ENCODE measurements at regions of chr20 and their contacts with region 1.

Region 1: GRCh38 chr20:35263532-35264223 is 14.2 kb downstream of the MMP24OS start:
- DNase-seq: peak in 1 of 2 experiments; percentile 59
- H3K4me3 ChIP-seq: no peak overlapping the region
- H3K27ac ChIP-seq: peak overlapping the region; percentile 7; the same call in 1 of the 2 replicates
- H3K4me1 ChIP-seq: peaks cover 14% of the 10 kb centered on the region
- H3K27me3 ChIP-seq: no peaks in the 10 kb centered on the region
- CTCF ChIP-seq: no peak

Region 2: GRCh38 chr20:35042268-35042667 is 221.4 kb before region 1 on chr20:
- CTCF ChIA-PET with region 1: no interaction called
- POLR2A ChIA-PET with region 1: no interaction called
- intact Hi-C with region 1: no loop called
- DNase-seq: no peak
- H3K4me3 ChIP-seq: no peak overlapping the region
- H3K27ac ChIP-seq: no peak overlapping the region
- H3K4me1 ChIP-seq: peaks cover 12% of the 10 kb centered on the region
- H3K27me3 ChIP-seq: no peaks in the 10 kb centered on the region
- CTCF ChIP-seq: no peak

Region 3: DNA sequence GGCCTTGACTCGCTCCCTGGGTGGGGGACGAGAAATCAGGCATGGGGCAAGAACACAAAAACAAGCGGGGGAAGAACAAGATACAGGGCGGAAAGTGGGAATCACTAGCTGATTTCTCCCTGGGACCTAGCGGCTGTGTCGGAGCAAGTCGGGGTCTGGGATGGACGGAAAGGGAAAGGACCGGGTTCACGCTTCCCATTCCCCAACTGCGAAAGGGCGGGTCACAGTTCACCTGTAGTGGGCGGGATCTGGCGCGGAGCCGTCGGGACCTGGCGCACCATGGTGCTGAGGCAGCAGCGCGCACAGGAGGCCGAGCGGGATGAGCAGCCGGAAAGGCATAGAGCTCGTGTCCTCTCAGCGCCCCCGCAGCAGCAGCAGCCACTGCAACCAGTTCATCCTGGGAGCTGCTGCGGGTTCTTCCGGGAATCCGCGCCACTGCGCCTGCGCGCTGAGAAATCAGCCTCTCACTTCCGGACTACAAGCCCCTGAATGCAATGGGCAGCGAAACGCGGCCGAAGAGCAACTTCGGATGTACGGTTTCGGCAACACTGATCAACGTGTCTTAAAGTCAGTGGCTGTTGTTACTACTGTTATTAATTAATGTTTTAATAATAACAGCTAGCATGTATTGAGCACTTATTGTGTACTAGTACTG is 116.6 kb before region 1 on chr20 and contains the start of gene EDEM2:
- CTCF ChIA-PET with region 1: interaction called, 10 read pairs
- POLR2A ChIA-PET with region 1: interaction called, 25 read pairs
- intact Hi-C with region 1: loop called (anchors 1 kb)
- DNase-seq: peak; percentile 89 to 96
- H3K4me3 ChIP-seq: peak within 1 kb of the TSS; percentile 93
- H3K27ac ChIP-seq: peak within 1 kb of the TSS; percentile 94
- H3K4me1 ChIP-seq: peaks cover 14% of the 10 kb centered on the region
- H3K27me3 ChIP-seq: no peaks in the 10 kb centered on the region
- CTCF ChIP-seq: no peak
- total RNA-seq, gene EDEM2: 28.6 and 34.9 TPM in 2 replicates

Region 4: DNA sequence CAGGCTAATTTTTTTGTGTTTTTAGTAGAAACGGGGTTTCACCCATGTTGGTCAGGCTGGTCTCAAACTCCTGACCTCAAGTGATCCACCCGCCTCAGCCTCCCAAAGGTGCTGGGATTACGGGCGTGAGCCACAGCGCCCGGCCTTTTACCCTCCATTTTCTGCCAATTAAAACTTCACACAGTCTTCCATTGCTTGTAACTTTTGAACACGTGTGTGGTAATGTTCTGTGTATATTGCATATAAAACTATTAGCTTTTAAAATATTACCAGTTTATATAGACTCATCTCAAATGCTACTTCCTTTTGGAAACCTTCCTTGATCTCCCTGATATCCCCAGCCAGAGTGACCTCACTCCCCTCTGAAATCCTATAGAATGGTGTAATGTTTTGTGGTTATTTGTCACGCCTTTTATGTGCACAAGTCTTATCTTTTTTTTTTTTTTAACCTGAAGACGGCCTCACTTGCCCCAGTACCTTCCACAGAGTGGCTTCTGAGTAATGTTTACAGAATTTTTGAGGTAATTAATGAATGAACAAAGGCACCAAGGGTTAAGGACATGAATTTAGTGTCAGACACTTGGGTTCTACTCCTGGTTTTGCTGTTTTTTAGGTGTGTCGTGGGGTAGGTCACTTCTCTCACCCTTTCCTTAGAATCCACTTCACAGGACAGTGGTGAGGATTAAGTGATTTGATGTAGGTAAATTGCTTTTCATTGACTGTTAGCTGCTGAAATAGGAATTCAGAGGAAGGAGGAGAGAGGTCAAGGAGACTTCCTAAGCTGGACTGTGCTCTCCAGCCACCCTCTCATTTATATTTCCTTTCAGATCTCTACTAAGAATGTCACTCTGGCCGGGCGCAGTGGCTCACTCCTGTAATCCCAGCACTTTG is 48.4 kb before region 1 on chr20:
- CTCF ChIA-PET with region 1: interaction called, 11 read pairs
- POLR2A ChIA-PET with region 1: no interaction called
- intact Hi-C with region 1: loop called (anchors 1 kb)
- DNase-seq: peak; percentile 52 to 98
- H3K4me3 ChIP-seq: no peak overlapping the region
- H3K27ac ChIP-seq: peak overlapping the region; percentile 94
- H3K4me1 ChIP-seq: peaks cover 28% of the 10 kb centered on the region
- H3K27me3 ChIP-seq: no peaks in the 10 kb centered on the region
- CTCF ChIP-seq: no peak

Region 5: GRCh38 chr20:35312348-35312747 is 48.7 kb after region 1 on chr20:
- CTCF ChIA-PET with region 1: interaction called, 19 read pairs
- POLR2A ChIA-PET with region 1: no interaction called
- intact Hi-C with region 1: no loop called
- DNase-seq: peak; percentile 74 to 95
- H3K4me3 ChIP-seq: no peak overlapping the region
- H3K27ac ChIP-seq: peak overlapping the region; percentile 97
- H3K4me1 ChIP-seq: peaks cover 63% of the 10 kb centered on the region
- H3K27me3 ChIP-seq: no peaks in the 10 kb centered on the region
- CTCF ChIP-seq: no peak

Region 6: DNA sequence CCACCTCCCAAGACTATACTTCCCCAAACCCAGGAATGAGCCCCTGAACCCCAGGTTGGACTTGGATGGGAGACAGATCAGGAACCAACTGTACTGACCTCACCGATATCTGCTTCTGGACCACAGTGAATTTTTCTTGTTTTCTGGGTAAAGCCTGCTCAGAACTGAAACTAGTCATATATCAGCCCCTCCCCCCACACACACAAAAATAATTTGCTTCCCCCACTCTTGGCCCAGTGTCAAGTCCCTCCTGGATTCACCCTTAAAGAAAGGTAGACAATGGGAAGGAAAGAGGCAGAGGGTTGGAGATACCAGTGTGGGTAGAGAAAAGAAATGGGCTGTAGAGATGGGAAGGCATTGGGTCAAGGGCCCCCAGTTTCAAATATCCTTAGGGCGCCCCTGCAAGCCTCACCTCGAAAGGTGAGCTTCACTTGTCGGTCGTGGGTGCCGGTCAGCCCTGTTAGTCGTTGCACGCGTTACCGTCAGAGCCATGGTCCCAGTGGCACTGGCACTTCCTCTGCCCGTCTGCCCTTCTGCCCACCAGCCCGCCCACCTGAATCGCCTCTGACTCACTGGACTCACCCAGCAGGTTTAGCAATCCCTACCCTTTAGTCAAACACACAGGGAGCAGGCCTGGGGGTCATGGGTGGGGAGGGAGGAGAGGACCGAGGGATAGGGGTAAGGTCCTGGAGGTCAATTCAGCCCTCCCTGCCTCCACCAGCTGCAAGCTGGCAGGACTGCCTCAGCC is 343.5 kb after region 1 on chr20:
- CTCF ChIA-PET with region 1: no interaction called
- POLR2A ChIA-PET with region 1: interaction called, 16 read pairs
- intact Hi-C with region 1: no loop called
- DNase-seq: peak; percentile 88 to 90
- H3K4me3 ChIP-seq: peak overlapping the region; percentile 57; the same call in 1 of the 2 replicates
- H3K27ac ChIP-seq: peak overlapping the region; percentile 57
- H3K4me1 ChIP-seq: peaks cover 39% of the 10 kb centered on the region
- H3K27me3 ChIP-seq: no peaks in the 10 kb centered on the region
- CTCF ChIP-seq: no peak

Region 7: GRCh38 chr20:36988494-36988966 is 1724.9 kb after region 1 on chr20:
- CTCF ChIA-PET with region 1: no interaction called
- POLR2A ChIA-PET with region 1: interaction called, 13 read pairs
- intact Hi-C with region 1: no loop called
- DNase-seq: no peak
- H3K4me3 ChIP-seq: no peak overlapping the region
- H3K27ac ChIP-seq: no peak overlapping the region
- H3K4me1 ChIP-seq: no peaks in the 10 kb centered on the region
- H3K27me3 ChIP-seq: no peaks in the 10 kb centered on the region
- CTCF ChIP-seq: no peak

Measured in PC-9 (cell line).